Body of pancreas (tissue), 4 donors: ENCODE measurements at regions of chr18 and their contacts with region 1.

Region 1: GRCh38 chr18:41436772-41437171 is 518.3 kb upstream of the PIK3C3 start:
- DNase-seq: no peak
- ATAC-seq: no peak
- H3K4me3 ChIP-seq: no peak overlapping the region
- H3K27ac ChIP-seq: no peak overlapping the region
- H3K4me1 ChIP-seq: no peaks in the 10 kb centered on the region
- H3K27me3 ChIP-seq: no peaks in the 10 kb centered on the region
- CTCF ChIP-seq: no peak
- POLR2A ChIP-seq: no peak

Region 2: GRCh38 chr18:41378598-41378997 is 58.2 kb before region 1 on chr18:
- intact Hi-C with region 1: loop called (anchors 10 kb)
- DNase-seq: no peak
- ATAC-seq: no peak
- H3K4me3 ChIP-seq: no peak overlapping the region
- H3K27ac ChIP-seq: no peak overlapping the region
- H3K4me1 ChIP-seq: no peaks in the 10 kb centered on the region
- H3K27me3 ChIP-seq: no peaks in the 10 kb centered on the region
- CTCF ChIP-seq: no peak
- POLR2A ChIP-seq: no peak